ENCODE measurements at regions of chr9 and their contacts with region 1.

Region 1: DNA sequence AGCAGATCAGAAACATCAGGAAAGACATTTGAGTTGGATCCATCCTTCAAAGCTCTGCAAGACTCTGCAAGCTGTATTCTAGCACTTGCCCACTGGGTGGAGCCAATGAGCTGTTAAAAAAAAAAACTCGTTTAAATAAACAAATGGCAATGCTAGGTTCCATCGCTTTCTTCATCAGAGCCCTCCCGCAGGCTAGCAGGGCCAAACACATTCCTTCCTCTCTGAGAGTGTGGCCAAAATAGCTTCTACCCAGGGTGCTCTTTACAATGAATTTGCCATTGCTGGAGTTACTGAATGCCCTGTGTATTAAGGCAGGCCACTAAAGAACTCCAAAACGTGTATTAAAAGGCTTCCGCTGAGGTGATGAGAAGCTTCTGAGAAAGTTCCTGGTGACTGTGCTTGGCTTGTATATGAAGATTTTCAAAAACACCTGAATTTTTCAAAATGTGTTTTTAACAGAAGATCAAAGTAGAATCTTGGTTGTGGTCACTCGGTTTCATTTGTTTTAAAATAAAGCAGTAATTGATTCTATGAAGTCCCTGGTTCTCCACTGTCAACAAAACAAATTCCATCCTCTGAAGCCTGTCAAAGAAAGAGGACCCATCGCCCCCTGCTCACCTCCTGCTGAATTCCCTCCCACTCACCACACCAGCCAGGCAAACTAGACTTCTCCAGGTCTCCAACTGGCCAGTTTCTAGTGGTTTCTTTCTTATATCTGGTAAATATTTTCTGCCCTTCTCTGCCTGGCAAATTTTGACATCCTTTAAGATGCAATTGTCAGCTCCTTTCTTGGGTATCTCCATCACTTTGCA is 36.5 kb upstream of the EQTN start:
- DNase-seq: peak; percentile 24
- H3K4me3 Mint-ChIP-seq: no peak overlapping the region
- H3K27ac Mint-ChIP-seq: no peak overlapping the region
- H3K4me1 Mint-ChIP-seq: no peaks in the 10 kb centered on the region
- H3K27me3 Mint-ChIP-seq: peaks cover 5% of the 10 kb centered on the region

Region 2: DNA sequence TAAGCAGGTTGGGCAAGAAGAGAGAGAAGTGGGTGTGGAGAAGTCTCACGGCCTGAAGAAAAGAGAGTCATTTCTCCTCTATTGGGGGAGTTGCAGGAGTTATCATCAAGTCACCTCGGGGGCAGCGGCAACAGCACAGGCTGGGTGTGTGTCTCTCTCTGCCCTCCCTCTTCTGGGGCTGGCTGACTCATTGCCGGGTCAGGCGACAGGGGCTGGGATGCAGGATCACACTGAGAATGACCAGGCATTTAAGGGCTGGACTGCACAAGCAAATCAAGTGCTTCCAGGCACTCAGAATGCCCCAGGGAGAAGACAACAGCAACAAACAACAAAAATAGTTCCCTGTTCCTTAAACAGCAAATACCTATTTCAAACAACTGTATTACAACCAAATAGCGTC is 30.2 kb before region 1 on chr9:
- intact Hi-C with region 1: no loop called
- DNase-seq: no peak
- H3K4me3 Mint-ChIP-seq: no peak overlapping the region
- H3K27ac Mint-ChIP-seq: no peak overlapping the region
- H3K4me1 Mint-ChIP-seq: no peaks in the 10 kb centered on the region
- H3K27me3 Mint-ChIP-seq: peaks cover 2% of the 10 kb centered on the region

Region 3: DNA sequence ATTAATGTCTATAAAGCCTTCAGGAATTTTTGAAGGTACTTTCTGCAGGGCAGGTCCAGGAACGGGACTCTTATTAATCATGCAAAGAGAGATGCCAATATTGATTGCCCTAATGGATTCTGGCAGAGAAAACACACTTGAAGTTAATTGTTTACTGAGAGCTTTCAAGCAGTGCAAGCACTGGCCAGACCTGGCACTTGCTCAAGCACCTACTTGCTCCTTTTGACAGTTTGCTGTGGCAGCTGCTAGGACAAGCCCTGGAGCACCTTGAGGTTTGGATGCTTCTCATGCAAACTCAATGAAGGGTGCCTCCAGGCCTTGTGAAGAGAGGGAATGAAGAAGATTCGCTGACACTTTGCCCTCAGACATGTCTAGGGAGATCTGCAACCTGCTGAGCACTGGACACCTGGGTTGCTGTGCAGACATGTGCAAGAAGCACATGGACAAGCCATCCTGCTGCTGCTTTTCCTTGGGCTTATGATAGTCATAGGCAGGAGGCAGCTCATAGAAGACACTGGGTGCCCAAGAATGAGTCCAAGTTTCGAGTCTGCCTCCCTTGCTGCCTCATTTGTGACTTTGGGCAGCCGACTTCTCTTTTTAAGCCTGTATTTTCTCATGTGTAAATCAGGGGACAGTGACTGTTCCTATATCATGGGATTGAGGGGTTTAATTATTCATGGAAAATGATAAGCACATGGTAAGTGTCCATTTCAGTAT is 52.3 kb after region 1 on chr9:
- intact Hi-C with region 1: loop called (anchors 5 kb)
- DNase-seq: no peak
- H3K4me3 Mint-ChIP-seq: no peak overlapping the region
- H3K27ac Mint-ChIP-seq: no peak overlapping the region
- H3K4me1 Mint-ChIP-seq: no peaks in the 10 kb centered on the region
- H3K27me3 Mint-ChIP-seq: peaks cover 21% of the 10 kb centered on the region

Region 4: DNA sequence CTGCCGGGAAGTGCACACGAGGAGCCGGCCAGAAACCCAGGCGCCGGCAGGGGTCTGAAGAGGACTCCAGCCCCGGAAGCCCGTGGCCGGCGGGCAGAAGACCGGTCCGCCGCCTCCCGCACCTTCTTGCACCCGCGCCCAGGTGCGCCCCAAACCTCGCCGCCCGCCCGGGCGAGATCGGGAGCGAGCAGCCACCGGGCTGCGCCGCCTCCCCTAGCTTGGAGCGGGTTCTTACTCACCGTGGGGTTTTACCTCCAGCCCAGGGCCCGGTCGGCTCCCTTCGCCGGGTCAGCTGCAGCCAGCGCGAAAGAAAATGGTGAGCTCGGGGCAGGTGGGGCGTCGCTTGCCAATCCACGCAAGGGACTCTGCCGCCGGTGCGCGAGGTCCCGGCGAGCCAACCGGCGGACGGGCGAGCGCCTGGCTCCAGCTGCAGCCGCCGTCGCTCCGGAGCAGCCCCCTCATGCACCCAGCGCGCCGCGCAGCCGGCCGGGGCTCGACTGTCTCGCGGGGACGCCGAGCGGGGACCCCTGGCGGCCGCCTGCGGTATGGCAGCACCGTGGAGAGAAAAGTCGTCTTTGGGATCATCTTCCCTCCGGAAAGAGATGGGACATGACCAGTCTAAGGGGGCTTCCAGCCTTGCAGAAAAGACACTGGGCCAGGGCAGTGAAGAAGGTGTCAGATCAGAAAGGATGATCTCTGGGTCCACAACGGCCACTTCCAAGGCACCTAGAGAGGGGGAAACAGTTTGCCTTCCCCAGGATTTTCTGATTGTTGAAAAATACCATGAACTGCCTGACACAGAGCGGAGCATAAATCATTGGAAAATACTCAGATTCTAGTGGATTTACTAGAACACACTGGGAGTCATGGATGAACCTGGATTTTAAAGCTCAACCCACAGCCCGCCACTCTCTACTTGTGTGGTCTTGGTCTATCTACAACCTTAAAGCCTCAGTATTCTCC is 196.2 kb after region 1 on chr9 and contains the start of gene MOB3B:
- intact Hi-C with region 1: loop called (anchors 1 kb)
- DNase-seq: peak; percentile 62
- H3K4me3 Mint-ChIP-seq: peak within 1 kb of the TSS; percentile 85
- H3K27ac Mint-ChIP-seq: peak within 1 kb of the TSS; percentile 62
- H3K4me1 Mint-ChIP-seq: peaks cover 6% of the 10 kb centered on the region
- H3K27me3 Mint-ChIP-seq: peaks cover 33% of the 10 kb centered on the region
- total RNA-seq, gene MOB3B: 0.94 and 1.3 TPM in 2 replicates

Region 5: GRCh38 chr9:27548055-27548741 is 214.8 kb after region 1 on chr9:
- intact Hi-C with region 1: loop called (anchors 1 kb)
- DNase-seq: no peak
- H3K4me3 Mint-ChIP-seq: no peak overlapping the region
- H3K27ac Mint-ChIP-seq: no peak overlapping the region
- H3K4me1 Mint-ChIP-seq: no peaks in the 10 kb centered on the region
- H3K27me3 Mint-ChIP-seq: no peaks in the 10 kb centered on the region

Region 6: GRCh38 chr9:27829621-27830020 is 496.2 kb after region 1 on chr9:
- intact Hi-C with region 1: no loop called
- DNase-seq: no peak
- H3K4me3 Mint-ChIP-seq: no peak overlapping the region
- H3K27ac Mint-ChIP-seq: no peak overlapping the region
- H3K4me1 Mint-ChIP-seq: no peaks in the 10 kb centered on the region
- H3K27me3 Mint-ChIP-seq: no peaks in the 10 kb centered on the region